ENCODE measurements at regions of chr1 and their contacts with region 1.

Region 1: DNA sequence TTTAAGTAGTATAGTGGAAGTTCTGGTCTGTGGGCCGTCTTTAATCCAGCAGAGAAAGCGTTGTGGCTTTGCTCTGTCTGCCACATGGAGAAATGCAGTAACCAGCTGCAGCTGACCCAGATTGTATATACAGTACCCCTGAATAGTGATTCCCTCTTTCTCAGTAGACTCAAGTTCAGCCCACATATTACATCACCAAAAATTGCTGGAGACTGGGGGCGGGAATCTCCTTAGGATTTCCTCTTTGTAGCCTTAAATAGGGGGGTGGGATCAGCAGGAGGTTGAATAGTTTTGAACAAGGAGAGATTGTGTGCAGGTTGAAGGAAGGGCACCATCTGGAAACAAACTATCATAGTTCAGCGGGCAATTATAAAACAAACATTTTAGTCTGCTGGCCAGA is at the start of gene ANGPTL1:
- DNase-seq: peak; percentile 88
- ATAC-seq: peak; percentile 88
- H3K4me3 ChIP-seq: peak within 1 kb of the TSS; percentile 46 to 75 (median 68)
- H3K27ac ChIP-seq: peak within 1 kb of the TSS; percentile 63
- H3K4me1 ChIP-seq: peaks cover 54% of the 10 kb centered on the region
- H3K27me3 ChIP-seq: no peaks in the 10 kb centered on the region
- CTCF ChIP-seq: no peak
- EP300 ChIP-seq: peak in 1 of 2 experiments; percentile 65; a peak in 2 of 4 replicates
- POLR2A ChIP-seq: no peak
- RAD21 ChIP-seq: no peak
- total RNA-seq, gene ANGPTL1: 2.2 and 2.9 TPM in 2 replicates

Region 2: DNA sequence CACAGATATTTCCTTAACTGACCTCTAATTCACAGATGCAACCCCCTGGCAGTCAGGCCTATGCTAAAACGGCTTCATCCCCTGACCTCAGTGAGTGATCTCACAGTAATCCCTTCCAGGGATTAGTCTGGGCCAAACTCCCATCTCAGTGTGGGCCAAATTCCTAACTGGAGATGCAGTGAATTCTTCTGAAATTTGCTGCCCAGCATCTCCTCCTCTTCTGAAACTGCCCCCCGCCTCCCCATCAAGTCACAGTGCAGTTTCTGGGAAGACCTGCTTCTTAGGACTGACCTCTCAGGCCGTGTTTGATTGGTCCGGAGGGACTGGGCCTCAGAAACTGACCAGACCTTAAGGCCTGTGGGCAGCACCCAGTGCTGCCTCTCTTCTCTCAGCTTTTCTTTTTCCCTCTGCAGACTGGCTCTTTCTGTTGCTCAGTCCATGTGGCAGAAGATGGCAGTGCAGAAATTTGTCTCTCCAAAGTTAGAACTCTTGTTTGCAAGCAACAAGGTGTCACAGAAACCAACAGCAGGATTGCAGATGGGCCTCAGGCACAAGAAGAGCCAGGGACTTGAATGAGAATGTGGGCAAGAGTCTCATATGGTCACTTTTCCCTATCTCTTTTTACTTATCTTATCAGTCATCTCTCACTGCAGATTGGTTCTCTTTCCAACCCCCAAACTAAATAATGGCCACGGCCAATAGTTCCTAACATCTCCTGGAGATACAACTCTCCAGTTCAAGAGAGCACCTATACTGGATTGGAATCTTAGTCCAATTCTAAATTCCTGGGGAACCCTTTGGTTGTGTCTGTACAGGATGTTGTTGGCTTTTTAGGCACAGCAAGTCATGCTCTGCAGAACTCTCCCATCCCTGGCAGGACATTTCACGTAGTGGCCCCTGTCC is 241.4 kb before region 1 on chr1:
- CTCF ChIA-PET with region 1: no interaction called
- POLR2A ChIA-PET with region 1: no interaction called
- in situ Hi-C with region 1: no loop called
- intact Hi-C with region 1: no loop called
- DNase-seq: no peak
- ATAC-seq: peak; percentile 59
- H3K4me3 ChIP-seq: no peak overlapping the region
- H3K27ac ChIP-seq: no peak overlapping the region
- H3K4me1 ChIP-seq: peaks cover 46% of the 10 kb centered on the region
- H3K27me3 ChIP-seq: no peaks in the 10 kb centered on the region
- CTCF ChIP-seq: no peak
- EP300 ChIP-seq: no peak
- POLR2A ChIP-seq: no peak
- RAD21 ChIP-seq: no peak

Region 3: DNA sequence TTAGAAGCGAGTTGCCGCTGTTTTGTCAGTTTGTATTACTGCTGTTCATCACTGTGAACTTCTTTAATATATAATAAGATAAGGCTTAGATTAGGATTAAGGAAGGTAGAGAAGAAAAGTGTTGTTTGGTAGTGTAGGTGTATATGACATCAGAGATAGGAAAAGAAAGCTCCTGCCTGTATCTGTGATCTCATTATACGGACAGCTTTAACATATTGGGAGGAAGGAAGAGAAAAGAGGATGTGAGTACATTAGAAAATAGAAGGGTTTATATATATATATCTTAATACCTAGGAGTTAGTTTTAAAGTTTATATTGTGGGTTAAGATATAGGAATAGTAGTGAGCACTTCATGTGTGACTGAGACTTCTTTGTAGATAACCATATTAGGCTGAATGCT is 74.9 kb before region 1 on chr1:
- CTCF ChIA-PET with region 1: no interaction called
- POLR2A ChIA-PET with region 1: no interaction called
- in situ Hi-C with region 1: no loop called
- intact Hi-C with region 1: loop called (anchors 2 kb)
- DNase-seq: no peak
- ATAC-seq: no peak
- H3K4me3 ChIP-seq: no peak overlapping the region
- H3K27ac ChIP-seq: no peak overlapping the region
- H3K4me1 ChIP-seq: no peaks in the 10 kb centered on the region
- H3K27me3 ChIP-seq: no peaks in the 10 kb centered on the region
- CTCF ChIP-seq: no peak
- EP300 ChIP-seq: no peak
- POLR2A ChIP-seq: no peak
- RAD21 ChIP-seq: no peak

Region 4: GRCh38 chr1:178825167-178825566 is 45.8 kb before region 1 on chr1:
- CTCF ChIA-PET with region 1: no interaction called
- POLR2A ChIA-PET with region 1: no interaction called
- in situ Hi-C with region 1: no loop called
- intact Hi-C with region 1: loop called (anchors 5 kb)
- DNase-seq: no peak
- ATAC-seq: no peak
- H3K4me3 ChIP-seq: no peak overlapping the region
- H3K27ac ChIP-seq: no peak overlapping the region
- H3K4me1 ChIP-seq: no peaks in the 10 kb centered on the region
- H3K27me3 ChIP-seq: no peaks in the 10 kb centered on the region
- CTCF ChIP-seq: no peak
- EP300 ChIP-seq: no peak
- POLR2A ChIP-seq: no peak
- RAD21 ChIP-seq: no peak

Region 5: DNA sequence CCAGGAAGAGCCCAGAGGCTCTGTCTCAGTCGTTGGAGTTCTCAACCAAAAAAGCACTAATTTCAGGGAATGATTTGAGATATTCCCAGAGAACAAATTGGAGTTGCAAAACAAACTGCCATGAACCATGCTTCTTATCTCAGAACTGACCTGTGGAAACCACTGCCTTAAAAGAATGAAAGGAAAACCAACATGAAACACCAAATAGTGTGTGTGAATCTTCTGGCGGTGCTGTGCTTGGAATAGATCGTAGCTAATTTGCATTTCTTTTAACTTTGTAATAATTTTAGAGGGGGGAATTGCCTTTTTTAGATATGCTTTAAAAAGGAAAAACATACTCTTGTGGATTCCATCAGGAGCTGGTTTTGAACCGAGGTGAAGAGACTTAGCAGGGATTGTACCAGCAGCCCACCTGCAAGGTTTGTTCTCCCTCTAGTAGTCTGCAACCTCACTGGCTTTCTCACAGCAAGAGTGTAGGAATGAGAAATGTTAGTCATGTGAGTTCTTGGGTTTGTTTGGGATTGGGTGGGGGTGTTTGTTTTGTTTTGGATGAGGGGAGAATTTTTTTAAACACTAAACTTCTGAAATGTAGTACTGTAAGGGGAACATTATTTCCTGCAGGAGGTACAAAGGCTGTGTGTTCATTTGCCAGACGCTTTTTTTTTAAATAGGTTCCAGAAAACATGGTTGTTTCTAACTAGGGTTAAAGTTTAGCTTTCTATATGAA is 45.7 kb after region 1 on chr1:
- CTCF ChIA-PET with region 1: no interaction called
- POLR2A ChIA-PET with region 1: interaction called, 4 read pairs
- in situ Hi-C with region 1: no loop called
- intact Hi-C with region 1: loop called (anchors 2 kb)
- DNase-seq: peak; percentile 91
- ATAC-seq: peak; percentile 92
- H3K4me3 ChIP-seq: peak overlapping the region in 1 of 3 experiments; percentile 34; a peak in 1 of 6 replicates
- H3K27ac ChIP-seq: peak overlapping the region; percentile 65
- H3K4me1 ChIP-seq: peaks cover 71% of the 10 kb centered on the region
- H3K27me3 ChIP-seq: no peaks in the 10 kb centered on the region
- CTCF ChIP-seq: no peak
- EP300 ChIP-seq: peak in 1 of 2 experiments; percentile 80; a peak in 2 of 4 replicates
- POLR2A ChIP-seq: peak; percentile 39 to 62; a peak in 2 of 4 replicates
- RAD21 ChIP-seq: no peak

Region 6: DNA sequence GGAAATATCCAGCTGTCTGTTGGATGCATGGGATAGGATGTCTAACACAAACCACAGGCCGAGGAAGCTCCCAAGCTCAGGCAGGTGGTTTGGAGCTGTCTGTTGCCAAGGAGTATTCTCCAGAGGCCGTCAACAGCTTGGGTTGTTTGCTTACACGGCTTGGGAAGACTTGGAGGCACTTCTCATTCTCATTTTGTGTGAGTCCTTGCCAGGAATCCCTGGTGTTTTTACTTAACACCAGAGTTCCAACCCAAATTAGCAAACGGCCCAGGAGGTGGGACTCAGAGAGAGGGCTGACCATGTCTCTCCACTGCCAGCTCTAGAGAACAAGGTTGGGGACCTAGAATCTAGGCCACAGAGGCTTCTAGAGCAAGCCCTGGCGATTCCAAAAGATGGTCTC is 82.1 kb after region 1 on chr1:
- CTCF ChIA-PET with region 1: no interaction called
- POLR2A ChIA-PET with region 1: no interaction called
- in situ Hi-C with region 1: no loop called
- intact Hi-C with region 1: no loop called
- DNase-seq: no peak
- ATAC-seq: peak; percentile 20
- H3K4me3 ChIP-seq: peak overlapping the region in 1 of 3 experiments; percentile 22; a peak in 1 of 6 replicates
- H3K27ac ChIP-seq: no peak overlapping the region
- H3K4me1 ChIP-seq: peaks cover 64% of the 10 kb centered on the region
- H3K27me3 ChIP-seq: no peaks in the 10 kb centered on the region; a peak in 1 of 5 replicates
- CTCF ChIP-seq: no peak
- EP300 ChIP-seq: no peak
- POLR2A ChIP-seq: no peak
- RAD21 ChIP-seq: no peak

Region 7: DNA sequence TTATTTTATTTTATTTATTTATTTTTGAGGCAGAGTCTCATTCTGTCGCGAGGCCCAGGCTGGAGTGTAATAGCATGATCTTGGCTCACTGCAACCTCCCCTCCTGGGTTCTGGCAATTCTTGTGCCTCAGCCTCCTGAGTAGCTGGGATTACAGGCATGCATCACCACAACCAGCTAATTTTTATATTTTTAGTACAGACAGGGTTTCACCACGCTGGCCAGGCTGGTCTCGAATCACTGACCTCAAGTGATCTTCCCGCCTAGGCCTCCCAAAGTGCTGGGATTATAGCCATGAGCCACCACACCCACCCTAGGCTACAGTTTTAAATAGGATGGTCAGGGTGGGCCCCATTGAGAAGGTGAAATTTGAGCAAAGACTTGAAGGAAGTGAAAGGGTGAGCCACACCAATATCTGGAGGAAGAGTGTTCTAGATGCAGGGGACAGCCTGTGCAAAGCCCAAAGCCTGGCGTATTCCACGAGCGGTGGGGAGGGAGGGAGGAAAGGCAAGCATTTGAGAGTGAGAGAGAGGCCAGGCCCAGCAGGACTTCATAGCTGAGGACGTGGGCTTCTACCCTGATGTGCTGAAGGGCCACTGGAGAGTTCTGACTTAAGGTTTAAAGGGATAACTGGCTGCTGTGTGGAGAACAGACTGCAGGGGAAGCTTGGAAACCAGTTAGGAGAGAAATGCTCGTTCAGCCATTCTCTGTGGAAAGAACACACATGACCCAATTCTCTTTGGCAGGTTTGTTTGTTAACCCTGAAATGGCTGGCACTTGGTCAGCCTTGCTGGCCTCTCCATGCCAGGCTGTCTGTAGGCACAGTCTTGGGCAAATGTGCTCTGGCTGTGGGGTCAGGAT is 92.1 kb after region 1 on chr1:
- CTCF ChIA-PET with region 1: no interaction called
- POLR2A ChIA-PET with region 1: no interaction called
- in situ Hi-C with region 1: no loop called
- intact Hi-C with region 1: no loop called
- DNase-seq: no peak
- ATAC-seq: peak; percentile 54; the same call in 2 of the 3 replicates
- H3K4me3 ChIP-seq: no peak overlapping the region; a peak in 1 of 6 replicates
- H3K27ac ChIP-seq: no peak overlapping the region
- H3K4me1 ChIP-seq: peaks cover 5% of the 10 kb centered on the region; the same call in 1 of the 2 replicates
- H3K27me3 ChIP-seq: no peaks in the 10 kb centered on the region; a peak in 1 of 5 replicates
- CTCF ChIP-seq: no peak
- EP300 ChIP-seq: no peak
- POLR2A ChIP-seq: no peak
- RAD21 ChIP-seq: no peak